ENCODE measurements at regions of chr10 and their contacts with region 1.

Region 1: GRCh38 chr10:102729029-102730026 is 14.4 kb upstream of the WBP1L start:
- DNase-seq: peak; percentile 56
- ATAC-seq: peak; percentile 98
- H3K4me3 ChIP-seq: no peak overlapping the region
- H3K27ac ChIP-seq: no peak overlapping the region
- H3K4me1 ChIP-seq: no peaks in the 10 kb centered on the region
- H3K27me3 ChIP-seq: no peaks in the 10 kb centered on the region
- CTCF ChIP-seq: peak; percentile 97
- EP300 ChIP-seq: no peak
- POLR2A ChIP-seq: no peak
- RAD21 ChIP-seq: peak; percentile 94

Region 2: GRCh38 chr10:102904346-102904745 is 175.0 kb after region 1 on chr10:
- CTCF ChIA-PET with region 1: interaction called, 9 read pairs
- POLR2A ChIA-PET with region 1: no interaction called
- in situ Hi-C with region 1: loop called (anchors 10 kb)
- intact Hi-C with region 1: loop called (anchors 1 kb)
- DNase-seq: no peak
- ATAC-seq: no peak
- H3K4me3 ChIP-seq: no peak overlapping the region
- H3K27ac ChIP-seq: no peak overlapping the region
- H3K4me1 ChIP-seq: peaks cover 9% of the 10 kb centered on the region
- H3K27me3 ChIP-seq: no peaks in the 10 kb centered on the region
- CTCF ChIP-seq: no peak
- EP300 ChIP-seq: no peak
- POLR2A ChIP-seq: no peak
- RAD21 ChIP-seq: no peak

Measured in HepG2 (cell line).